ENCODE measurements at regions of chr3 and their contacts with region 1.

Region 1: DNA sequence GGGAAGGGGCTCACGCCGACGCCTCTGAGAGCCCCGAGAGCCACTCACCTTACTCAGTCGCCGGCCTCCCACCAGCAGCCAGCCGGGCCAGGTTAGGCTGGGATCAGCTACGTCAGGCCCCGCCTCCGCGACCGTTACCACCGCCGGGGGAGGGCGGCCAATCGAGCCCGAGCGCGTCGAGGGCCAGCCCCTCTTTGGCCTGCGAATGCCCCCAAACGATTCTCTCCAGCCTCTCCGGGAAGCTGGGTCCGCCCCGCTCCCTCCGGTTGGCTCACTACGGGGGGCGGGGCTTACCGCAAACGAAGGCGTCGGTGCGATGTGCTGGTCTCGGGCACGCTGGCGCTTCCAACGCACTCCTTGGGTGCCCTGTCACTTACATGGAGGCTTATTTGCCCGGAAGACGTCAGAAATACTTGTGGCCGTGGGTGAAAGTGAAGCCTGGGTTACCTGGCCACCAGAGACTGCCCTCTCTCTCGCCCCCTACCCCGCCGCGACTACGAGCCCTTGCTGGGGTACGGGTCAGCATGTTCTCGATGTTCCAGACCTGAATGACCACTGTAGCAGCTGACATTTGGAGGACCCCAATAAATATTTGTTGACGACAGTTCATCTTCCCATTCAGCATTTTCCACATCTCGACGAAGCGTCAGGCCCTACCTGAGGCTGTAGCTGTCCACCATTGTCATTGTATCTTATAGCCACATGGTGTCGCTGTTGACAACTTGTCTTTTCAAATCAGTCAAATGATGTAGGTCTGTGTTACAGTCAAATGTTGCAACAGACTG is at the start of gene CEP70:
- DNase-seq: peak; percentile 100
- H3K4me3 Mint-ChIP-seq: peak within 1 kb of the TSS; percentile 80
- H3K27ac Mint-ChIP-seq: peak within 1 kb of the TSS; percentile 90
- H3K4me1 Mint-ChIP-seq: peaks cover 38% of the 10 kb centered on the region
- H3K27me3 Mint-ChIP-seq: no peaks in the 10 kb centered on the region
- CTCF ChIP-seq: peak; percentile 97
- total RNA-seq, gene CEP70: 88.8 and 99.1 TPM in 2 replicates

Region 2: GRCh38 chr3:137420198-137420995 is 1173.9 kb before region 1 on chr3:
- CTCF ChIA-PET with region 1: no interaction called
- intact Hi-C with region 1: no loop called
- DNase-seq: no peak
- H3K4me3 Mint-ChIP-seq: no peak overlapping the region
- H3K27ac Mint-ChIP-seq: no peak overlapping the region
- H3K4me1 Mint-ChIP-seq: no peaks in the 10 kb centered on the region
- H3K27me3 Mint-ChIP-seq: no peaks in the 10 kb centered on the region
- CTCF ChIP-seq: no peak

Region 3: GRCh38 chr3:138332472-138333076 is 261.8 kb before region 1 on chr3:
- CTCF ChIA-PET with region 1: no interaction called
- intact Hi-C with region 1: loop called (anchors 5 kb)
- DNase-seq: no peak
- H3K4me3 Mint-ChIP-seq: no peak overlapping the region
- H3K27ac Mint-ChIP-seq: no peak overlapping the region
- H3K4me1 Mint-ChIP-seq: peaks cover 7% of the 10 kb centered on the region
- H3K27me3 Mint-ChIP-seq: peaks cover 20% of the 10 kb centered on the region
- CTCF ChIP-seq: peak; percentile 58

Region 4: GRCh38 chr3:138442433-138442832 is 151.9 kb before region 1 on chr3:
- CTCF ChIA-PET with region 1: no interaction called
- intact Hi-C with region 1: no loop called
- DNase-seq: peak; percentile 42
- H3K4me3 Mint-ChIP-seq: no peak overlapping the region
- H3K27ac Mint-ChIP-seq: no peak overlapping the region
- H3K4me1 Mint-ChIP-seq: no peaks in the 10 kb centered on the region
- H3K27me3 Mint-ChIP-seq: peaks cover 30% of the 10 kb centered on the region
- CTCF ChIP-seq: no peak

Region 5: GRCh38 chr3:138479438-138479863 is 114.9 kb before region 1 on chr3:
- CTCF ChIA-PET with region 1: interaction called, 4 read pairs
- intact Hi-C with region 1: loop called (anchors 5 kb)
- DNase-seq: peak; percentile 79
- H3K4me3 Mint-ChIP-seq: no peak overlapping the region
- H3K27ac Mint-ChIP-seq: no peak overlapping the region
- H3K4me1 Mint-ChIP-seq: no peaks in the 10 kb centered on the region
- H3K27me3 Mint-ChIP-seq: no peaks in the 10 kb centered on the region
- CTCF ChIP-seq: peak; percentile 92

Region 6: GRCh38 chr3:138694287-138695007 is 100.1 kb after region 1 on chr3:
- CTCF ChIA-PET with region 1: interaction called, 10 read pairs
- intact Hi-C with region 1: loop called (anchors 2 kb)
- DNase-seq: no peak
- H3K4me3 Mint-ChIP-seq: no peak overlapping the region
- H3K27ac Mint-ChIP-seq: no peak overlapping the region
- H3K4me1 Mint-ChIP-seq: peaks cover 13% of the 10 kb centered on the region
- H3K27me3 Mint-ChIP-seq: no peaks in the 10 kb centered on the region
- CTCF ChIP-seq: no peak

Region 7: GRCh38 chr3:138834359-138835212 is 240.2 kb after region 1 on chr3 and contains the start of gene PIK3CB:
- CTCF ChIA-PET with region 1: no interaction called
- intact Hi-C with region 1: loop called (anchors 1 kb)
- DNase-seq: peak; percentile 99
- H3K4me3 Mint-ChIP-seq: peak within 1 kb of the TSS; percentile 82
- H3K27ac Mint-ChIP-seq: peak within 1 kb of the TSS; percentile 94
- H3K4me1 Mint-ChIP-seq: peaks cover 30% of the 10 kb centered on the region
- H3K27me3 Mint-ChIP-seq: no peaks in the 10 kb centered on the region
- CTCF ChIP-seq: no peak
- total RNA-seq, gene PIK3CB: 52.6 and 59.3 TPM in 2 replicates

Region 8: DNA sequence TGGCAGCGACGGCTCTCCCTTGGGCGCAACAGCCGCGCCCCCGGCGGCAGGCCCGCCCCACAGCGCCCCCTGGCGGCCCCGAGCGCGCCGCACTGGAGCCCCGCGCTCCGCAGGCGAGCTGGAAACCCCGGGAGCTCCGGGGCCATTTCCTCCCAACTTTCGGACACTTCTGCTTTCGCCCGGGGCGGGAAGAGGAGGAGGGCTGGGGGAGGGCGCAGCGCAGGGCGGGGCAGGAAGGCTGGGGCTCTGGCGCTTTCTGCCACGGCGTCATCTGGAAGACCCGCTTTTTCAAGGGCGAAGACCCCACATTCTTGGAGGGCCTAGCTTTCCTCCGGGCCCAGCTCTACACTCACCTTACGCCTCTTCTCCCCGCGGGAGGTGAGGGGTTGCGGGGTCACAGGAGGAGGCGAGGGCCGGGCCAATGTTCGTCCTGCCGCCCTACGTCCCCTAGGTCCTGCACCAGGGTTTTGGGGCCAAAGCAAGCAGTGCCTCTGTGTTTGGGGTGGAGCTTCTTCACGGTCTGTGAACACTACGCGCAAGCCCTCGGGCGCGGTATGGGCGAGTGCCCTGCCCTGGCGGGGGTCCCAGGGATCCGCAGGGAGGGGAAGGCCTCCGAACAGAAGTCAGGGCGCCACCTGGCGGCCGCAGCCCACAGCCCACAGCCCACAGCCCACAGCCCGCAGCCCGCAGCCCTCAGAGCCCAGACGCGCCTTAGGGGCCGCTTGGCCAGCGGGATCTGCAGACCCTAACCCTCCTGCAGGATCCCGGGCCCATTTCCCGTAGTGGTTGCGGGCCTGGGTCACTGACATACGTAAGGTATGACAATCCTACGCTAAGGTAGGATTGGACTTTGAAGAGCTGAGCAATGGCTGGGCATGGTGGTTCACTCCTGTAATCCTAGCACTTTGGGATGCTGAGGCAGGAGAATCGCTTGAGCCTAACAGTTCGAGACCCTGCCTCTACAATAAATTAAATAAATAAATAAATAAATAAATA is 321.5 kb after region 1 on chr3:
- CTCF ChIA-PET with region 1: interaction called, 94 read pairs
- intact Hi-C with region 1: loop called (anchors 1 kb)
- DNase-seq: peak; percentile 99
- H3K4me3 Mint-ChIP-seq: peak overlapping the region; percentile 71
- H3K27ac Mint-ChIP-seq: peak overlapping the region; percentile 53
- H3K4me1 Mint-ChIP-seq: peaks cover 19% of the 10 kb centered on the region
- H3K27me3 Mint-ChIP-seq: no peaks in the 10 kb centered on the region
- CTCF ChIP-seq: peak; percentile 94

Measured in Calu3 (cell line).